OCI-LY7 (cell line): ENCODE measurements at regions of chr9 and their contacts with region 1.

Region 1: DNA sequence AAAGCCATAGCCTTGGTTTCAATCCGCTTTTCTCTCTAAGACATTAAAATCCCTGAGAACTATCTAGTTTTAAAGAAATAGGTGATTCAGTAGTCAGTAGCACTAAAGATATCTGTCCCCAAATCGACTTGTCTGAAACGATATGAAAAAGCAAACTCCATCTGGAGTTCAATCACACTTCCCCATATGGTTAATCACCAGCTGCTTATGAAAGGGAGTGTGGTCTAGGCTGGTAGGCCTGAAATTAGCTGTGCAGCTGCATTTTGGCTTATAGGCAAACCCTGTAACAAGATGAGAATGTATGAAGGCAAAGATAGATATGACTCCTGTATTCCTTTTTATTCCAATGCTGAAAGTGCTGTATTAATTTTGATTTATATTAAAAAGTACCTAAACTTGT is 65.9 kb downstream of the DMRTA1 start:
- DNase-seq: peak; percentile 95
- H3K4me3 ChIP-seq: peak overlapping the region; percentile 19
- H3K27ac ChIP-seq: peak overlapping the region; percentile 94
- H3K4me1 ChIP-seq: peaks cover 66% of the 10 kb centered on the region
- CTCF ChIP-seq: no peak

Region 2: GRCh38 chr9:21802195-21803000 is 710.1 kb before region 1 on chr9 and contains the start of gene MTAP:
- CTCF ChIA-PET with region 1: no interaction called
- POLR2A ChIA-PET with region 1: no interaction called
- intact Hi-C with region 1: loop called (anchors 10 kb)
- DNase-seq: peak; percentile 90
- H3K4me3 ChIP-seq: peak within 1 kb of the TSS; percentile 97
- H3K27ac ChIP-seq: peak within 1 kb of the TSS; percentile 73
- H3K4me1 ChIP-seq: peaks cover 43% of the 10 kb centered on the region
- CTCF ChIP-seq: no peak
- total RNA-seq, gene MTAP: 41.6 and 50.4 TPM in 2 replicates